ENCODE measurements at regions of chr10 and their contacts with region 1.

Region 1: DNA sequence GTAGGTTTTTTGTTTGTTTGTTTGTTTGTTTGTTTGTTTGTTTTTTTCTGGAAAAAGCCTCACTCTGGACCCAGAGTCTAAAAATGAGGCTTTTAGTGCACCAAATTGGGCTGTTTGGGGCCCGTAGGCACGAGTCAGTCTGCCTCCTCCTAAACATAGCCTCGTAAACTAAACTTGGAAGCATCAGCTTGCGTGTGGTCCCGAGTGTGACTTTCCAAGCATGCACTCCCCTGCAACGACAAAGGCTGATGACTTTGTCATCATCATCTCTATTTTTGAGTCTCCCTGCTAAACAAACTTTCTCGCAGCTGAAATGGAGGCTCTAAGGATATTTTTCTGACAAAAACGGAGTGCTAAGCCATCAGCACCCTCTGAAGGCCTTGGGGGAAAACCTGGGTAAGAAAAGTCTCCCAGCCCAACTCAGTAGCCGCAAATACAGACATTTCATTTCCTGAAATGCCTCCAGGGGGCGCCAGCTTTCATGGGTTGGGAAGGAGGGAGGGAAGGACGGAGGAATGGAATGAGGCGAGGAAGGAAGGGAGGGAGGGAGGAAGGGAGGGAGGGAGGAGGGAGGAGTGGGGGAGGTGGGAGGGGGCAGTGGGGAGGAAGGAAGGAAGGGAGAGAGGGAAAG is 245.9 kb downstream of the KCNMA1 start:
- DNase-seq: peak; percentile 83
- H3K4me3 ChIP-seq: no peak overlapping the region
- H3K27ac ChIP-seq: peak overlapping the region; percentile 33 to 82 (median 68)
- H3K4me1 ChIP-seq: peaks cover 5 to 30% (median 24%) of the 10 kb centered on the region in 4 donors
- H3K27me3 ChIP-seq: peaks cover 12% of the 10 kb centered on the region
- CTCF ChIP-seq: peak; percentile 60 to 69 (median 65)
- EP300 ChIP-seq: no peak
- POLR2A ChIP-seq: no peak

Region 2: GRCh38 chr10:77173615-77174461 is 217.9 kb before region 1 on chr10:
- in situ Hi-C with region 1: loop called in 3 of 4 experiments (anchors 10 to 25 kb)
- intact Hi-C with region 1: loop called (anchors 5 kb)
- DNase-seq: peak; percentile 80
- H3K4me3 ChIP-seq: no peak overlapping the region
- H3K27ac ChIP-seq: peak overlapping the region in 3 of 4 donors; percentile 20 to 62 (median 39)
- H3K4me1 ChIP-seq: peaks cover 0 to 4% (median 2%) of the 10 kb centered on the region in 4 donors
- H3K27me3 ChIP-seq: no peaks in the 10 kb centered on the region
- CTCF ChIP-seq: peak; percentile 85 to 93 (median 88)
- EP300 ChIP-seq: no peak
- POLR2A ChIP-seq: no peak

Region 3: GRCh38 chr10:77179015-77179695 is 212.6 kb before region 1 on chr10:
- in situ Hi-C with region 1: loop called in 3 of 4 experiments (anchors 10 to 25 kb)
- intact Hi-C with region 1: loop called (anchors 5 kb)
- DNase-seq: peak; percentile 33
- H3K4me3 ChIP-seq: no peak overlapping the region
- H3K27ac ChIP-seq: peak overlapping the region; percentile 28 to 62 (median 43)
- H3K4me1 ChIP-seq: peaks cover 0 to 3% (median 0%) of the 10 kb centered on the region in 4 donors
- H3K27me3 ChIP-seq: no peaks in the 10 kb centered on the region
- CTCF ChIP-seq: no peak
- EP300 ChIP-seq: no peak
- POLR2A ChIP-seq: no peak